CD8-positive, alpha-beta T cell (primary cell): ENCODE measurements at regions of chr10 and their contacts with region 1.

Region 1: DNA sequence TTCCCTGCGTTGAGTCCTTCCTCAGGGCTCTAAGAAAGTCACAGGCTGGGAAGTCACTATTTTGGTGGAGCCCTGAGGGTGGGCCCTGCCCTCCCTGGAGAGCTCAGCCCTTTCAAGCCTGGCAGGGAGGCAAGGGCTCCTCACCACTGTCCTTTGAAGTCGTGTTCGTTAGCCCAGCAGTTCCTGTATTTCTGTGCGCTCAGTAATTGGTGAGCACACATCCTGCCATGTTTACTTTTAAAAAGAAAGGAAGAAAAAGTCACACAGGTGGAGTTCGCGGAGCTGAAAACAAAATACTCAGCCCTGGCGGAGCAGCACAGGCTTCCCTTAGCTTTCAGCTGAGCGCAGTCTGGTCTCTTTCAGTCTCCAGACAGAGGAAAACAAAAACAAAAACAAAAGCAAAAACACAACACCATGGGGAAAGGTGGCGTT is 37.1 kb downstream of the PRKCQ start:
- DNase-seq: peak in 8 of 9 experiments; percentile 39 to 85 (median 66)
- ATAC-seq: peak; percentile 74
- H3K4me3 ChIP-seq: peak overlapping the region; percentile 33 to 40
- H3K4me3 Mint-ChIP-seq: peak overlapping the region; percentile 88
- H3K27ac ChIP-seq: peak overlapping the region; percentile 78 to 92
- H3K27ac Mint-ChIP-seq: peak overlapping the region; percentile 99
- H3K4me1 ChIP-seq: peaks cover 68% of the 10 kb centered on the region
- H3K4me1 Mint-ChIP-seq: peaks cover 78% of the 10 kb centered on the region
- H3K27me3 ChIP-seq: no peaks in the 10 kb centered on the region
- H3K27me3 Mint-ChIP-seq: no peaks in the 10 kb centered on the region
- CTCF ChIP-seq: no peak

Region 2: DNA sequence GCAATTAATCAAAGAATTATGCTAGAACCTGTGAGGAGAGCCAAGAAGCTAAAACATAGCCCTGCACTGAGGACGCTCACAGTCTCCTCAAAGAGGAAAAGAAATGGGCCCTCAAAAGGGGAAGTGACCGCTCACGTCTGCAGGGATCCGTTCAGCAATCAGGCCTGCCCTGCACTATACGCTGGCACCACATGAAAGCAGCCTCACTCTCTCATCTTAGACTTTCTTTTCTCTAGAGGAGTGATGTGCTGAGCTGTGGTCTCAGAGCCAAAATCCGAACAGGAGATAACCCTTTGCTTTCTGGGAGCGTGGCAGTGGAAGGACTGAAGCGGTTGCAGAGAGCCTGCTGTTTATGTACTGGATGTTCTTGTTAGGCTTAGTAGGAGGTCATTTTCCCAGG is 474.6 kb before region 1 on chr10:
- CTCF ChIA-PET with region 1: no interaction called
- POLR2A ChIA-PET with region 1: no interaction called
- intact Hi-C with region 1: no loop called
- DNase-seq: peak in 5 of 9 experiments; percentile 30 to 72 (median 50)
- ATAC-seq: peak; percentile 81
- H3K4me3 ChIP-seq: peak overlapping the region in 1 of 2 experiments; percentile 23
- H3K4me3 Mint-ChIP-seq: peak overlapping the region; percentile 80
- H3K27ac ChIP-seq: no peak overlapping the region
- H3K27ac Mint-ChIP-seq: peak overlapping the region; percentile 81
- H3K4me1 ChIP-seq: peaks cover 49% of the 10 kb centered on the region
- H3K4me1 Mint-ChIP-seq: peaks cover 73% of the 10 kb centered on the region
- H3K27me3 ChIP-seq: no peaks in the 10 kb centered on the region
- H3K27me3 Mint-ChIP-seq: no peaks in the 10 kb centered on the region
- CTCF ChIP-seq: no peak

Region 3: GRCh38 chr10:6151087-6151977 is 391.7 kb before region 1 on chr10:
- CTCF ChIA-PET with region 1: no interaction called
- POLR2A ChIA-PET with region 1: no interaction called
- intact Hi-C with region 1: no loop called
- DNase-seq: peak in 7 of 9 experiments; percentile 21 to 78 (median 54)
- ATAC-seq: peak; percentile 69
- H3K4me3 ChIP-seq: peak overlapping the region in 1 of 2 experiments; percentile 12
- H3K4me3 Mint-ChIP-seq: peak overlapping the region; percentile 70
- H3K27ac ChIP-seq: peak overlapping the region in 1 of 2 experiments; percentile 49
- H3K27ac Mint-ChIP-seq: peak overlapping the region; percentile 84
- H3K4me1 ChIP-seq: peaks cover 35% of the 10 kb centered on the region
- H3K4me1 Mint-ChIP-seq: peaks cover 53% of the 10 kb centered on the region
- H3K27me3 ChIP-seq: no peaks in the 10 kb centered on the region
- H3K27me3 Mint-ChIP-seq: no peaks in the 10 kb centered on the region
- CTCF ChIP-seq: peak; percentile 37

Region 4: DNA sequence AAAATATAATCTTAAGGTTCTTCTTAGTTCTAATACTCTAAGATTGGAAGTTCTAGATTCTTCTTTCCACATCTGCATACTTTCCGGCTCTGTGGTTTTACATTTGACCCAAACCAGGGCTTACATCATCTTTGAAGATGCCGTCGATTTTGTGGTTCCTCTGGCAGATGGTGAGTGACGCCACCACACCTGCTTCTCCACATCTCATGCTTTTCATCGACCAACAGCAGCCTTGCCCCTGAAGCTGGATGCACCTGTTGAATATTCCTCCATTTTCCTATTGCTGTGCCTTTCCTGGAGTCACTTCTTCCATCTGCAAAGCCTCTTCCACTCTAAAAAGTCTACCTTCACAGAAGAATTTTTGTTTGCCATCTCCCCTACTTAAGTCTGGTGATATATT is 84.2 kb before region 1 on chr10:
- CTCF ChIA-PET with region 1: no interaction called
- POLR2A ChIA-PET with region 1: no interaction called
- intact Hi-C with region 1: no loop called
- DNase-seq: peak in 1 of 9 experiments; percentile 37
- ATAC-seq: no peak
- H3K4me3 ChIP-seq: no peak overlapping the region
- H3K4me3 Mint-ChIP-seq: no peak overlapping the region
- H3K27ac ChIP-seq: no peak overlapping the region
- H3K27ac Mint-ChIP-seq: peak overlapping the region; percentile 63
- H3K4me1 ChIP-seq: no peaks in the 10 kb centered on the region
- H3K4me1 Mint-ChIP-seq: peaks cover 22% of the 10 kb centered on the region
- H3K27me3 ChIP-seq: no peaks in the 10 kb centered on the region
- H3K27me3 Mint-ChIP-seq: no peaks in the 10 kb centered on the region
- CTCF ChIP-seq: no peak

Region 5: DNA sequence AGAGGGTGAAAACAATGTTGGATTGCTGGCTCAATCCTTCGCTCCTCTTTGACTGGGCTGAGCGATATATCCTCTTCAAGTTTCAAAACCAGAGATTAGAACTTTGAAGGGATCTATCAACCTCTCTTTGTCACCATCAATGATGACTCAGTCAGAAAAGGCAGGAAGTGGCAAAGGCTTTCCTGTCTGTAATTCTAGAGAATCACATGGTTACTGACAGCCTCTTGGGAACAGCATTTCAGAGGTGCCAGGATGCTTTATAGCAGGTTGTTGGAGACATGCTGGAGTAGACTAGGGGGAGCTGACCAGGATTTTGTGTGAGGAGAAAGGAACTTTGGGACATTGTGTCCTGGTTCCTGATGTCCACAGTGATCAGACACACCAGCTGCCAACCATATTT is 44.2 kb before region 1 on chr10:
- CTCF ChIA-PET with region 1: interaction called, 4 read pairs
- POLR2A ChIA-PET with region 1: interaction called, 3 read pairs
- intact Hi-C with region 1: loop called in 1 of 2 experiments (anchors 2 kb)
- DNase-seq: peak in 7 of 9 experiments; percentile 42 to 89 (median 52)
- ATAC-seq: peak; percentile 72
- H3K4me3 ChIP-seq: no peak overlapping the region
- H3K4me3 Mint-ChIP-seq: peak overlapping the region; percentile 55
- H3K27ac ChIP-seq: peak overlapping the region; percentile 0 to 87
- H3K27ac Mint-ChIP-seq: peak overlapping the region; percentile 94
- H3K4me1 ChIP-seq: peaks cover 36% of the 10 kb centered on the region
- H3K4me1 Mint-ChIP-seq: peaks cover 31% of the 10 kb centered on the region
- H3K27me3 ChIP-seq: no peaks in the 10 kb centered on the region
- H3K27me3 Mint-ChIP-seq: no peaks in the 10 kb centered on the region
- CTCF ChIP-seq: no peak

Region 6: DNA sequence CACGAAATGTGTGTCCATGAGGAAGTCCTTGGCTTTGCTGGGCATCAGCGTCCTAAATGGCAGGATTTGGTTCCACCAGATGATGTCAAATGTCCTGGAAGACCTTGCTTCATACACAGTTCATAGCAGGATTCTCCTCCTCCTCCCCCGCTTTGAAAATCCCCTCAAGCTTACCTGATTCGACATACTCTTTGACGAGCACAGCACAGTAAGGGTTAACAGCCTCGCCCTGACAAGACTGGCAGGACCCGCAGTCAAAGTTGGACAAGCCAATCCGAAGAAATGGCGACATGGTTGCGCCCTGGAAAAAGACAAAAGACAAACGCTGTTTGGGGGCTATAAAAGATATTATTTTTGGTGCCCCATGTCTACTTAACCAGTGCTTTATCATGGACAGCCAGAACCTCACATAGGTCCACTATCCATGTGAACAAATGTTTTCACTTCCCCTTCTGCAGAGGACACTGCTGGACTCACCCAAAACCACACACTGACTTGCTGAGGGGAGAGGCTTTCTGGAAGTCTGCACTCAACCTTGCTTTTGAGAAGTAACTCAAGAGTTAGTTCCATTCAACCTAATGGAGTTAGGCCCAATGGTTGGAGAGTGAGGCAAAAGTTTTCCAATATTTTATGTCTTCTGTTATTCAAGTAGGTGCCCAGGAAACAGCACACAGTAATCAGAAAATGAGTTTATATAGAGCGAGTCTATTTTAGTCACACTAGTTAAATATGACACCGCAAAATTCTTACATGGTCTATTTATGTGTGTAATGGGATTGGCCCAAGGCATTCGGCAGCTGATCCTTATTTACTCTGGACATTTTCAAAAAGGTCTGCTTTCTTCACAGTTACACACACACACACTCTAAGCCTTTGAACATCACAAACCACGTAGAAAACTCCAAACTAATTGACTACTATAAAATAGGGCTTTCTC is 27.9 kb before region 1 on chr10:
- CTCF ChIA-PET with region 1: interaction called, 18 read pairs
- POLR2A ChIA-PET with region 1: interaction called, 12 read pairs
- intact Hi-C with region 1: no loop called
- DNase-seq: no peak
- ATAC-seq: no peak
- H3K4me3 ChIP-seq: no peak overlapping the region
- H3K4me3 Mint-ChIP-seq: no peak overlapping the region
- H3K27ac ChIP-seq: peak overlapping the region in 1 of 2 experiments; percentile 33
- H3K27ac Mint-ChIP-seq: peak overlapping the region; percentile 65
- H3K4me1 ChIP-seq: peaks cover 43% of the 10 kb centered on the region
- H3K4me1 Mint-ChIP-seq: peaks cover 79% of the 10 kb centered on the region
- H3K27me3 ChIP-seq: no peaks in the 10 kb centered on the region
- H3K27me3 Mint-ChIP-seq: no peaks in the 10 kb centered on the region
- CTCF ChIP-seq: no peak

Region 7: DNA sequence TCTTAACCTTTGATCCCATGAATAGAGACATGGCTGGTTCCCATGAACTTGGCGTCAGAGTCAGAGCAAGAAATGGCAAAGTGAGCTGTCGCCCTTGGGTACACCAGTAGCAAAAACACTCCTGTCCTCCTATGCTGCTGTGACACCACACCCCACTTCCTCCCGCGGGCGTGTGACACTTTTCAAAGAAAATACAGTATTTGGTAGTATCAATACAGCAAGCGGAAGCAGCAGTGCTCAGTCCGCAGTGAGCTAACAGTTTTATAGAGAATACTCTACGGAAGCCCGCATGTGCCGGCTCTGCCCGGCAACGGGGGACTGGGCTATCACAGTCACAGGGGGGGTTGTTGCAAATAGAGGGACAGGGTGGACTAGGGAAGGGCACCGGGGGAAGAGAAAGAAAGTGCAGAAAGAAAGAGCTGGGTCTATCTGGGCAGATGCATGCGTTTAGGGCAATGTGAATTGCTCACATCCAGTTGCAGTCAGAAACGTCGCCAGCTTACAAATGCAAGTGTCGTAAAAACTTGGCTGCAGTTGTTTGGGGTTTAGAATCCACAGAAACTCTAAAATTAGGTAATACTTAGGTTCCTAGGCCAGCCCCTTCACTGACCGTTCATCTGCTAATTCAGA is 12.7 kb before region 1 on chr10:
- CTCF ChIA-PET with region 1: interaction called, 14 read pairs
- POLR2A ChIA-PET with region 1: interaction called, 31 read pairs
- intact Hi-C with region 1: loop called (anchors 1 kb)
- DNase-seq: peak; percentile 49 to 89 (median 77)
- ATAC-seq: peak; percentile 96
- H3K4me3 ChIP-seq: peak overlapping the region; percentile 38 to 42
- H3K4me3 Mint-ChIP-seq: peak overlapping the region; percentile 83
- H3K27ac ChIP-seq: peak overlapping the region; percentile 84 to 89
- H3K27ac Mint-ChIP-seq: peak overlapping the region; percentile 97
- H3K4me1 ChIP-seq: peaks cover 57% of the 10 kb centered on the region
- H3K4me1 Mint-ChIP-seq: peaks cover 85% of the 10 kb centered on the region
- H3K27me3 ChIP-seq: no peaks in the 10 kb centered on the region
- H3K27me3 Mint-ChIP-seq: no peaks in the 10 kb centered on the region
- CTCF ChIP-seq: no peak

Region 8: GRCh38 chr10:6563075-6563474 is 20.1 kb after region 1 on chr10:
- CTCF ChIA-PET with region 1: interaction called, 4 read pairs
- POLR2A ChIA-PET with region 1: interaction called, 27 read pairs
- intact Hi-C with region 1: loop called (anchors 2 kb)
- DNase-seq: peak in 5 of 9 experiments; percentile 6 to 68 (median 44)
- ATAC-seq: peak; percentile 64
- H3K4me3 ChIP-seq: no peak overlapping the region
- H3K4me3 Mint-ChIP-seq: peak overlapping the region; percentile 57
- H3K27ac ChIP-seq: peak overlapping the region; percentile 7 to 63
- H3K27ac Mint-ChIP-seq: peak overlapping the region; percentile 80
- H3K4me1 ChIP-seq: peaks cover 79% of the 10 kb centered on the region
- H3K4me1 Mint-ChIP-seq: peaks cover 91% of the 10 kb centered on the region
- H3K27me3 ChIP-seq: no peaks in the 10 kb centered on the region
- H3K27me3 Mint-ChIP-seq: no peaks in the 10 kb centered on the region
- CTCF ChIP-seq: no peak

Region 9: DNA sequence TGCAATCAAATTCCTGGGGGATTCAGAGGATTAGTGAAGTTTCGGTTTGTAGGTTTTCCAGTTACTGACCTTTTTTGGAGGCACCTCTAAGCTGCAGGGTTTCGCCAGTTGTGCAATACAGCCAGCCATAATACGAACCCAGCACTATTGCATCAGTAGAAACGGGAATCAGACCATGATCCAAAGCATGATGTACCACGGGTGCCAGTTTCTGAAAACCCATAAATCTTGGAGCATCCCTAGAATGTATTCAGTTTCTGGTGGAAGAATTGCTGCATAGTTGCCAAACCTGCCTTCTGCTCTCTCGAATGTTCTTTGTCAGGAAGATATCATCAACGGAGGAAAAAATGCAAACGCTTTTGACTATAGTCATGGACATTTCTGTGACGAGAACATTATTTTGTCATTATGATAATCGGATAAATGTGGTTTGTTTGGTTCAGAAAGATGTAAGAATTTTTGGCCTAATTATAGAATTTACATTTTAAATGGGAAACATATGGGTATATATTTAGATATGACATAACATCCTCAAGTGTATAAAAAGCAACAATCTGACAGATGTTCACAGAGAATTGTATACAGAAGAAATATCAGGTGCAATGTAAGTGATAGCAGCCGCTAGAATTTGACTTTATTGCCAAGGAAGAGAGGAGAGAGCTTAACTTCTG is 223.3 kb after region 1 on chr10:
- CTCF ChIA-PET with region 1: no interaction called
- POLR2A ChIA-PET with region 1: no interaction called
- intact Hi-C with region 1: loop called in 1 of 2 experiments (anchors 5 kb)
- DNase-seq: no peak
- ATAC-seq: no peak
- H3K4me3 ChIP-seq: no peak overlapping the region
- H3K4me3 Mint-ChIP-seq: no peak overlapping the region
- H3K27ac ChIP-seq: no peak overlapping the region
- H3K27ac Mint-ChIP-seq: no peak overlapping the region
- H3K4me1 ChIP-seq: no peaks in the 10 kb centered on the region
- H3K4me1 Mint-ChIP-seq: no peaks in the 10 kb centered on the region
- H3K27me3 ChIP-seq: peaks cover 0 to 6% of the 10 kb centered on the region in 2 experiments
- H3K27me3 Mint-ChIP-seq: peaks cover 29% of the 10 kb centered on the region
- CTCF ChIP-seq: no peak

Region 10: DNA sequence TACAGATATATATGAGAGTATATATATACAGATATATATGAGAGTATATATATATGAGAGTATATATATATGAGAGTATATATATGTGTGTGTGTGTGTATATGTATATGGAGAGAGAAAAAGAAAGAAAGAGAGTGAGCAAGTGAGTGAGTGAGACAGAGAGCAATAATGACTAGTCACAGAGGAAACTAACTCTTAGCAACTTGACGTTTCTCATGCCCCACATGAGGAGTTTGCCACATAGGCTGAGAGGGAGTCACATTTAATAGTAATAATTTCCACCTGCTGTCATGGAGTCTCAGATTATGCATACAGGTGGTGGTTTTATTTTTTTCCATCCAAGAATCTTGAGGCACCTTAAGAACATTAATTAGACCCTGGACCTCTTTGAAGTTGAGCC is 1711.3 kb after region 1 on chr10:
- CTCF ChIA-PET with region 1: no interaction called
- POLR2A ChIA-PET with region 1: no interaction called
- intact Hi-C with region 1: no loop called
- DNase-seq: no peak
- ATAC-seq: no peak
- H3K4me3 ChIP-seq: no peak overlapping the region
- H3K4me3 Mint-ChIP-seq: no peak overlapping the region
- H3K27ac ChIP-seq: no peak overlapping the region
- H3K27ac Mint-ChIP-seq: no peak overlapping the region
- H3K4me1 ChIP-seq: no peaks in the 10 kb centered on the region
- H3K4me1 Mint-ChIP-seq: no peaks in the 10 kb centered on the region
- H3K27me3 ChIP-seq: no peaks in the 10 kb centered on the region
- H3K27me3 Mint-ChIP-seq: no peaks in the 10 kb centered on the region
- CTCF ChIP-seq: no peak

Region 11: GRCh38 chr10:8416192-8416701 is 1873.2 kb after region 1 on chr10:
- CTCF ChIA-PET with region 1: no interaction called
- POLR2A ChIA-PET with region 1: no interaction called
- intact Hi-C with region 1: loop called in 1 of 2 experiments (anchors 10 kb)
- DNase-seq: peak in 7 of 9 experiments; percentile 18 to 88 (median 44)
- ATAC-seq: peak; percentile 84
- H3K4me3 ChIP-seq: no peak overlapping the region
- H3K4me3 Mint-ChIP-seq: no peak overlapping the region
- H3K27ac ChIP-seq: peak overlapping the region; percentile 50 to 78
- H3K27ac Mint-ChIP-seq: peak overlapping the region; percentile 96
- H3K4me1 ChIP-seq: peaks cover 19% of the 10 kb centered on the region
- H3K4me1 Mint-ChIP-seq: peaks cover 30% of the 10 kb centered on the region
- H3K27me3 ChIP-seq: no peaks in the 10 kb centered on the region
- H3K27me3 Mint-ChIP-seq: no peaks in the 10 kb centered on the region
- CTCF ChIP-seq: no peak